Posterior cingulate gyrus (tissue), 11 donors: ENCODE measurements at regions of chr5 and their contacts with region 1.

Region 1: DNA sequence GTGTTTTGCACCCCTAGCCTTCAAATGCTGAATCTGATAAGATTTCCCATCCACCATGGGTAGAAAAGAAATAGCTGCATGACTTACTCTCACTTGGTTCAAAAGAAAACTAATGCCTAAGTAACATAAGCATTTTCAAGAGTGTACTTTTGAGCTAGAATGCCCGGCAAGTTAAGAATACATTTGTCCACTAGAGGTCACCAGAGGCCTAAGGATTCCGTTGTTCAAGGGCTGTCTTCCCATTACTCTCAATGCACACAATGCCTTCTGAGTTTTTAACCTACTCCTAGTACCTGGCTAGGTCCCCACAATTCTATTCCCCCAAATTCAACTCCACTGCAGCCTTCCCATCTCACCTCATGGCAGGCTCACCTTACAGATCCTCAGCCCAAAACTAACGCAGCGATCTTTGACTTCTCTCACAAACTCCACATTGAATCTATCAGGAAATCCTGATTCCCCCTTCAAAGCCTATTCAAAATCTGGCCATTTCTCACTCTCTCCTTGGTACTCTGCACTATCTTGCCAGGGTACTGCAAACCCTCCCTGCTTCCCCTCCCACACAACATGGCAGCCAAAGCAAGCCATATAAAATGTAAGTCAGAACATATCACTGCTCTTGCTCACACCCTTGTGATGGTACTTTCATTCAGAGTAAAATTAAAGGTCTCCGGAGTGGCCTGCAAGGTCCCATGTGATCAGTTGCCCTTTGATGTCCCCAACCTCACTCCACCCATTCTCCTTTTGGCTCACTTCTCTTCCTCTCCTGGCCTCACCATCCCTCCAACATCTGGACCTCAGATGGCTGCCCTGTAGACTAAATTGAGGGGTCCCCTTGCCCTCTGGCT is 13.4 kb downstream of the OXCT1 start:
- DNase-seq: peak in 5 of 10 donors; percentile 32 to 79 (median 42)

Region 2: DNA sequence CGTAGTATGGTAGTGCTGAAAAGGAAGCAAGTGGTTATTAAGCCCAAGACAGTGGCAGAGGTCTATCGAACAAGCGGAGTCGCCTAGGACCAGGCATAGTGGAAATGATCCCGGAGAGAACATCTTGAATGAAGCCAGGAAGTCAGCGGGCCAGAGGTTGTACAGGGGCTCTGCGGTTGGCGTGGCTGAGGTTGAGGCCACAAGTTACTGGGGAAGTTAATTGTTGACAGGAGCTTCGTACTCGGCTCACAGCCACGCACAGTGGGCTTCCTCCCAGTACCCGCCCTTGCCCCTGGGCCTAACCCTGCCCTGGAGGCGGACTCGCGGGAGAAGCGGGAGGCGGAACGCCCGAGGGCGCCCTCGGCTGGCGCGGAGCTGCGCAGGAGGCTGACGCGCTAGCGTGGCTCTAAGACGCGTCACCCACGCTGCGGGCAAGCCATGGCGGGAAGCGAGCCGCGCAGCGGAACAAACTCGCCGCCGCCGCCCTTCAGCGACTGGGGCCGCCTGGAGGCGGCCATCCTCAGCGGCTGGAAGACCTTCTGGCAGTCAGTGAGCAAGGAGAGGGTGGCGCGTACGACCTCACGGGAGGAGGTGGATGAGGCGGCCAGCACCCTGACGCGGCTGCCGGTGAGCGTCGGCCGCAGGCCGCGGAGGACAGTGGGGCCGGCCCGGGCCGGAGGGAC is 68.1 kb after region 1 on chr5 and contains the start of gene FBXO4:
- intact Hi-C with region 1: loop called (anchors 1 kb)
- DNase-seq: peak; percentile 68 to 98 (median 83)

Region 3: GRCh38 chr5:42005561-42006153 is 148.8 kb after region 1 on chr5:
- intact Hi-C with region 1: no loop called
- DNase-seq: no peak

Region 4: GRCh38 chr5:42057254-42057690 is 200.4 kb after region 1 on chr5:
- intact Hi-C with region 1: loop called (anchors 1 kb)
- DNase-seq: peak in 2 of 10 donors; percentile 6 to 27

Region 5: GRCh38 chr5:42767491-42768105 is 910.7 kb after region 1 on chr5:
- intact Hi-C with region 1: loop called (anchors 2 kb)
- DNase-seq: no peak